Ascending aorta (tissue), 2 donors: ENCODE measurements at regions of chr17 and their contacts with region 1.

Region 1: DNA sequence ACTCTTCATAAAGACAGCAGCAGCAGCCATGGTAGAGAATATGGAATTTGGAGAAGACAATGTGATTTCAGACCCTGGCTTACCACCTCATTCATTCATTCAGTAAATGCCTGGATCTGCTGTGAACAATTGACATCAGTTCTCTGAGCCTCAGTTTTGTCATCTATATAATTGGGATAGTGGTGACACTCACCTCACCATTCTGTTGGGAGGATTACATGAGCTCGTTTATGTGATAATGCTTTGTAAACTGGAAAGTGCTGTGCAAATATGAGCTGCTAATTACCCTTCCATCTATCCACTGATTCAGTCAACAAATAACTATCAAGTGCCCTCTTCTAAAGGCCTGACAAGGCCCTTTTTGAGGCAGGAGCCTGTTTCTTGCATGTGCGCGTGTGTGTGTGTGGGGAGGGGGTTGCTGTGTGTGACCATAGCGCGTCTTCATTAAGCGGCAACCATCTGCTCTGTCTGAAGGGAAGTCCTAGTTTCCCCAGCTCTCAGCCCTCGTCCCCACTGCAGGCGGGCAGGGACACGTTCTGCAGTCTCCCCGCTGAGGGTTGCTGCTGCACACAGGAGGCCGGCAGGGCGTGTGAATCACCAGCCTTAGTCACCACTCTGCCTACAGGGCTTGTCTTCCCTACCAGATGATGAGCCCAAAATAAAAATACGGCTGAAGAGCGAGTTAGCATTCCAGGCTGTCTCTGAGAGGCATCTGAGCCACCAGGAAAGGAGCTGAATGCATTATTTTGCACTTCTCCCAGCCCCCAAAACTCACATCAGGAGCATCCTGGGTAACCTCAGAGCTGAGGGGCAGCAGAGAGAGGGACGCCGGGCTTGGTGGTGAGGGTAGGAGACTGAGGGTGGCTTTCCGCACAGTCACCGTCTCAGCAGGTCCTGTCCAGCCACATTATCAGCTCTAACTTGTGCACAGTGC is 19.9 kb downstream of the ARL4D start:
- DNase-seq: peak in 1 of 2 donors; percentile 73
- H3K4me3 ChIP-seq: no peak overlapping the region
- H3K27ac ChIP-seq: peak overlapping the region; percentile 63 to 72
- H3K4me1 ChIP-seq: peaks cover 9 to 21% of the 10 kb centered on the region in 2 donors
- H3K27me3 ChIP-seq: no peaks in the 10 kb centered on the region
- CTCF ChIP-seq: no peak

Region 2: DNA sequence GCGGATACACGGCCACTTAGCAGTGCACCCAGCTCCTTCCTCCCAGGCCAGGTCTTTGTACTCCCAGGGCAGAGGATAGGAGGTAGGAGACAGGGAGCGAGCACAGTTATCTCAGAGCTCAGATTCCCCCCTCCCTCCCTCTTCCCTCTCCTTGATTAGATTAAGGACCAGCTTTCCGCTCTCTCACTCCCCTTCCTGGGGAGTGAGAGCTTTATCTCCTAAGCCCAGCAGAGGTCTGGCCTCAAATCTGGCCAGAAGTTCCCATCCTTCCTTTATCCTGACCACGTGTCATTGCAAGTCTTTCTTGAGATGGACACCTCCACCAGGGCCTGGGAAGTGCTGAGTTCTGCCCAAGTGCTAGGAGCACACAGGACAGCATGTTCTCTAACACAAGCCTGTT is 14.9 kb before region 1 on chr17:
- intact Hi-C with region 1: loop called (anchors 2 kb)
- DNase-seq: no peak
- H3K4me3 ChIP-seq: no peak overlapping the region
- H3K27ac ChIP-seq: no peak overlapping the region
- H3K4me1 ChIP-seq: peaks cover 10 to 21% of the 10 kb centered on the region in 2 donors
- H3K27me3 ChIP-seq: no peaks in the 10 kb centered on the region
- CTCF ChIP-seq: no peak

Region 3: DNA sequence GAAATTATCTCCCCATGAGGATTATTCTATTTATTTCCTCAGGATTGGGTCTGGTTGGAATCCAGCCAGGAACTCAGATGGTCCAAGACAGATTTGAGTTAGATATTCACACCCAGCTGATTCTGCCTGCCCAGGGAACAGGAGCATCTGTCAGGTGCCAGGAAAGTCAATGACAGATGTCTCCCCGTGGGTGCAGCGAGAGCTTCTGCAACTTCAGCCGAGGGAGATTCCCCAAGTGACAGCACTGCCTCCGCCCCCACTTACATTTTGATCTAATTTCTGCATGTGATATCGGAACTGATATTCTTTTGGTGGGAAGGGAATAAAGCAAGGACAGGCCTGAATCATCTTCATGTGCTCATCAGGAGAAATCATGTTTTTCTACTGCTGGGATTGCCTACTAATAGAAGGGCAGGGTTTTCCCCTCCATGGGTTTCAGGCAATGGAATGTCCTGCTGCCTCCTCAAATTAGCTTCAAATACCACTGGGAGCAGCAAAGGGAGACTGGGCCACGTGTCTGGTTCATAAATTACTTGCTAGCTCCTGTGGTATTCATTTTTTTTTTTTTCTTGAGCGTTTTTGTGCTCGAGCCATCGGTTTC is 49.4 kb after region 1 on chr17:
- intact Hi-C with region 1: no loop called
- DNase-seq: no peak
- H3K4me3 ChIP-seq: no peak overlapping the region
- H3K27ac ChIP-seq: no peak overlapping the region
- H3K4me1 ChIP-seq: no peaks in the 10 kb centered on the region
- H3K27me3 ChIP-seq: no peaks in the 10 kb centered on the region
- CTCF ChIP-seq: no peak